ENCODE measurements at regions of chr20 and their contacts with region 1.

Region 1: DNA sequence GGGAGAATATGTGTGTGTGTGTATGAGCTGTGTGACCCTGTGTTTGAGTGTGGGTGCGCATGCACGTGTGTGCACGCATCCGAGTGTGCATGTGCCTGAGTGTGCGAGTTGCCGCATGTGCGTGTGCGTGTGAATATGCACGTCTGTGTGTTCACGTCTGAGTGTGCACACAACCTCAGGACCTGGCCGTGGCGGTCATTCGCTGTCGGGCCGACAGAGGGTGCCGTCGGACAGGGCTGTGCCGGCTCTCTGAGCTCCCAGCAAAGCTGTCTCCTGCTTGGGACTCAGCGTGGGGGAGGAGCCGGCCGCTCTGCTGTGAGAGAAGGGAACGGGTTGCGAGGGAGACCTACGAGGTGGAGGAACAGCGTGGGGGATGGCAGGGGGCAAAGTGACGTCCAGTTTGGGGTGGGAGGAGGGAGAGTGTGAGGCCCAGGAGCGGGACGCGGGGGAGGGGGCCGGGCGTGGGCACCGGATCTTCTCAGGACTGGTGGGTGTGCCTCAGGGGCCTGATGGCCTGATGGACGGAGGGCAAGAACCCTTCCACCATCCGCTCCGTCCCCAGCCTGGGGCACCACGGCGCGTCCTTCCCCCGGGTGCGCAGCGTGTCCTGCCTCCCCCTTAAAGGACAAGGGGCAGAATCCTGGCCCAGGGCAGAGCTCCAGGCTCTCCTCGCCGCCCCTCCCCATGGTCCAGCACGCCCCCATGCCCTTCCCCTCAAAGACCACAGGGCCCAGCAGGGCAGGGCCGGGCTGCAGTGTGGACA is 19.9 kb downstream of the SLC17A9 start:
- DNase-seq: peak; percentile 45
- H3K4me3 ChIP-seq: peak overlapping the region; percentile 39
- H3K27ac ChIP-seq: no peak overlapping the region
- H3K27me3 ChIP-seq: peaks cover 47% of the 10 kb centered on the region
- CTCF ChIP-seq: peak; percentile 87

Region 2: GRCh38 chr20:62953839-62954703 is 18.4 kb before region 1 on chr20:
- CTCF ChIA-PET with region 1: interaction called, 12 read pairs
- POLR2A ChIA-PET with region 1: no interaction called
- DNase-seq: peak; percentile 18
- H3K4me3 ChIP-seq: peak overlapping the region; percentile 25
- H3K27ac ChIP-seq: peak overlapping the region; percentile 86
- H3K27me3 ChIP-seq: no peaks in the 10 kb centered on the region
- CTCF ChIP-seq: no peak

Region 3: DNA sequence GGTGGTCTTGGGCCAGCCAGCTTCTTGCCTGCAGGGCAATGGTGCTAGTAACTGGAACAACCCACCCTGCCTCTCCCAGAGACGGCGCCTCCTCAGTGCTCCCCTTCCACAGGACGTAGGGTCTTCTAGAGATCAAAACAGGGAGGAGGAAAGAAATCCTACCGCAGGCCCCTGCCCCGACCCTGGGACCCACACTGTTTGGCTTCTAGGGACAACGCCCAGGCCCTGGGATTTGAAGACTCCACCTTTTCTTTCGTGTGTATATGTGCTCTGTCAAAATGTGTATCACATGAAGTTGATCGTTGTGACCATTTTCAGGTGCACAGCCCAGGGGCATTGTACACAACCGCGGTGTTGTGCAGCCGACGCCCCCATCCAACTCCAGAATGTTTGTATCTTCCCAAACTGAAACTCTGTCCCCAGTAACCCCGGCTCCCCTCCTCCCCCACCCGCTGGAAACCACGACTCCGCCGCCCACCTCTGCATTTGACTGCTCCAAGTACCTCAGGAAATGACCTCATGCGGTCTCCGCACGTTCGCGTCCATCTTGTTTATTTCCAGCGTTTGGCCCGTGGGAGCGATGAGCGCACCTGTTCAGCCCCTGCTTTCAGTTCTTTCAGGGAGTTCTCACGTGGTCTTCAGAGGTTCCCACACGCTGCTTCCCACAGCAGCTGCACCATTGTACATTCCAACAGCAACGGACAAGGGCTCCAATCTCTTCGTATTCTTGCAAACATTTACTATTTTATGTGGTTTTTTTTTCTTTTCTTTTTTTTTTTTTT is 37.7 kb after region 1 on chr20:
- CTCF ChIA-PET with region 1: interaction called, 13 read pairs
- POLR2A ChIA-PET with region 1: interaction called, 9 read pairs
- DNase-seq: no peak
- H3K4me3 ChIP-seq: no peak overlapping the region
- H3K27ac ChIP-seq: no peak overlapping the region
- H3K27me3 ChIP-seq: peaks cover 86% of the 10 kb centered on the region
- CTCF ChIP-seq: no peak